K562 (cell line): ENCODE measurements at regions of chr16 and their contacts with region 1.

Region 1: GRCh38 chr16:31202414-31203375 is at the start of gene PYCARD:
- DNase-seq: peak; percentile 41 to 59 (median 57)
- ATAC-seq: peak; percentile 22
- H3K4me3 ChIP-seq: peak within 1 kb of the TSS; percentile 45
- H3K27ac ChIP-seq: no peak within 1 kb of the TSS; the same call in 2 of the 3 replicates
- H3K4me1 ChIP-seq: peaks cover 20 to 33% of the 10 kb centered on the region in 2 experiments
- H3K27me3 ChIP-seq: peaks cover 0 to 6% of the 10 kb centered on the region in 2 experiments; a peak in 2 of 5 replicates
- CTCF ChIP-seq: no peak
- EP300 ChIP-seq: no peak
- POLR2A ChIP-seq: no peak
- RAD21 ChIP-seq: no peak
- polyA plus RNA-seq, gene PYCARD: 1.3 to 1.6 TPM

Region 2: DNA sequence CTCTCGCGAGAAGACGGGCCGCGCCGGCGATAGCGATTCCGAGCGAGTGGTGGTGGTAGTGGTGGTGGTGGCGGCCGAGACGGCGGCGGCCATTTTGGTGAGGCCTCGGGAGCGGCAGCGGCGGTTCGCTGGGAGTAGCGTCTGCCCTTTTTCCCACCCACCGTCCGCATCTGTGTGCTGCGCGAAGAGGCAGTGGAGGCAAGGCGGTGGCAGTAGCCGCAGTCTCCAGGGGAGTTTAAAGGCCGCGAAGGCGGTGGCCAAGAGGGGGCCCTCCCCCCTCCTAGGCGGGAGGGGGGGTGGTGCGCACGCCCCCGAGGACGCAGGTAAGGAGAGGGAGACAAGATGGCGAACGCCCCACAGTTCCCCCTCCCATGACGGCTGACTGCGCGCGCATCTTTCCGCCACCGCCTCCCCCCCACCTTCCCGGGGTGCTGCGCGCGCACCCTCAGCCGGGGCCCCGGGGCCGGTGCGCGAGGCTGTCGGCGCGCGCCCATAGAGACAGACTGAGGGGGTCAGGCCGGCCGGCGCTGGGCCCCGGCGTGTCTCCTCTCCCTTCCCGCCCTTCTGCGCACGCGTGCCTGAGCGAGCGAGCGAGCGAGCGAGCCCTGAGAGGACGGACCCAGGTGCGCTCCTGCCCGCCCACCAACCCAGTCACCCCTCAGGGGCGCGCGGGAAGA is 504.4 kb before region 1 on chr16:
- CTCF ChIA-PET with region 1: no interaction called
- POLR2A ChIA-PET with region 1: no interaction called
- in situ Hi-C with region 1: no loop called
- intact Hi-C with region 1: no loop called
- DNase-seq: peak; percentile 97 to 99 (median 98)
- ATAC-seq: peak; percentile 82
- H3K4me3 ChIP-seq: peak overlapping the region; percentile 82
- H3K27ac ChIP-seq: peak overlapping the region; percentile 100
- H3K4me1 ChIP-seq: peaks cover 26 to 27% of the 10 kb centered on the region in 2 experiments
- H3K27me3 ChIP-seq: no peaks in the 10 kb centered on the region
- CTCF ChIP-seq: peak in 1 of 3 experiments; percentile 33; a peak in 2 of 6 replicates
- EP300 ChIP-seq: peak; percentile 9; the same call in 1 of the 2 replicates
- POLR2A ChIP-seq: peak; percentile 96
- RAD21 ChIP-seq: no peak

Region 3: GRCh38 chr16:31215287-31216162 is 12.8 kb after region 1 on chr16:
- CTCF ChIA-PET with region 1: no interaction called
- POLR2A ChIA-PET with region 1: interaction called, 33 read pairs
- in situ Hi-C with region 1: no loop called
- intact Hi-C with region 1: no loop called
- DNase-seq: peak; percentile 88 to 98 (median 95)
- ATAC-seq: peak; percentile 97
- H3K4me3 ChIP-seq: peak overlapping the region; percentile 41
- H3K27ac ChIP-seq: no peak overlapping the region
- H3K4me1 ChIP-seq: peaks cover 0 to 41% of the 10 kb centered on the region in 2 experiments; a peak in 4 of 5 replicates
- H3K27me3 ChIP-seq: no peaks in the 10 kb centered on the region
- CTCF ChIP-seq: no peak
- EP300 ChIP-seq: no peak
- POLR2A ChIP-seq: no peak
- RAD21 ChIP-seq: no peak; a peak in 1 of 4 replicates

Region 4: DNA sequence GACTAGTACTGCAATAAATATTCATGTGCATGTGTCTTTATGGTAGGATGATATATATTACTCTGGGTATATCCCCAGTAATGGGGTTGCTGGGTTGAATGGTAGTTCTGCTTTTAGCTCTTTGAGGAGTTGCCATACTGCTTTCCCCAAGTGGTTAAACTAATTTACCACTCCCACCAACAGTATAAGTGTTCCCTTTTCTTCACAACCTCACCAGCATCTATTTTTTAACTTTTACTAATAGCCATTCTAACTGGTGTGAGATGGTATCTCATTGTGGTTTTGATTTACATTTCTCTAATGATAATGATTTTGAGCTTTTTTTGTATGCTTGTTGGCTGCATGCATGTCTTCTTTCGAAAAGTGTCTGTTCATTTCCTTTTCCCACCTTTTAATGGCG is 90.0 kb after region 1 on chr16:
- CTCF ChIA-PET with region 1: no interaction called
- POLR2A ChIA-PET with region 1: no interaction called
- in situ Hi-C with region 1: loop called (anchors 5 kb)
- intact Hi-C with region 1: no loop called
- DNase-seq: no peak
- ATAC-seq: no peak
- H3K4me3 ChIP-seq: no peak overlapping the region
- H3K27ac ChIP-seq: no peak overlapping the region
- H3K4me1 ChIP-seq: peaks cover 0 to 5% of the 10 kb centered on the region in 2 experiments; a peak in 1 of 5 replicates
- H3K27me3 ChIP-seq: peaks cover 2 to 4% of the 10 kb centered on the region in 2 experiments; a peak in 1 of 5 replicates
- CTCF ChIP-seq: no peak
- EP300 ChIP-seq: no peak
- POLR2A ChIP-seq: no peak
- RAD21 ChIP-seq: no peak

Region 5: GRCh38 chr16:31382485-31383161 is 179.9 kb after region 1 on chr16:
- CTCF ChIA-PET with region 1: no interaction called
- POLR2A ChIA-PET with region 1: no interaction called
- in situ Hi-C with region 1: no loop called
- intact Hi-C with region 1: loop called (anchors 5 kb)
- DNase-seq: peak; percentile 71 to 82 (median 72)
- ATAC-seq: peak; percentile 96
- H3K4me3 ChIP-seq: no peak overlapping the region
- H3K27ac ChIP-seq: no peak overlapping the region
- H3K4me1 ChIP-seq: peaks cover 0 to 5% of the 10 kb centered on the region in 2 experiments; a peak in 2 of 5 replicates
- H3K27me3 ChIP-seq: peaks cover 3 to 34% of the 10 kb centered on the region in 2 experiments; a peak in 4 of 5 replicates
- CTCF ChIP-seq: peak; percentile 82 to 90 (median 86)
- EP300 ChIP-seq: no peak
- POLR2A ChIP-seq: no peak
- RAD21 ChIP-seq: peak; percentile 56 to 83